Mucosa of descending colon (tissue), 3 donors: ENCODE measurements at regions of chr1 and their contacts with region 1.

Region 1: DNA sequence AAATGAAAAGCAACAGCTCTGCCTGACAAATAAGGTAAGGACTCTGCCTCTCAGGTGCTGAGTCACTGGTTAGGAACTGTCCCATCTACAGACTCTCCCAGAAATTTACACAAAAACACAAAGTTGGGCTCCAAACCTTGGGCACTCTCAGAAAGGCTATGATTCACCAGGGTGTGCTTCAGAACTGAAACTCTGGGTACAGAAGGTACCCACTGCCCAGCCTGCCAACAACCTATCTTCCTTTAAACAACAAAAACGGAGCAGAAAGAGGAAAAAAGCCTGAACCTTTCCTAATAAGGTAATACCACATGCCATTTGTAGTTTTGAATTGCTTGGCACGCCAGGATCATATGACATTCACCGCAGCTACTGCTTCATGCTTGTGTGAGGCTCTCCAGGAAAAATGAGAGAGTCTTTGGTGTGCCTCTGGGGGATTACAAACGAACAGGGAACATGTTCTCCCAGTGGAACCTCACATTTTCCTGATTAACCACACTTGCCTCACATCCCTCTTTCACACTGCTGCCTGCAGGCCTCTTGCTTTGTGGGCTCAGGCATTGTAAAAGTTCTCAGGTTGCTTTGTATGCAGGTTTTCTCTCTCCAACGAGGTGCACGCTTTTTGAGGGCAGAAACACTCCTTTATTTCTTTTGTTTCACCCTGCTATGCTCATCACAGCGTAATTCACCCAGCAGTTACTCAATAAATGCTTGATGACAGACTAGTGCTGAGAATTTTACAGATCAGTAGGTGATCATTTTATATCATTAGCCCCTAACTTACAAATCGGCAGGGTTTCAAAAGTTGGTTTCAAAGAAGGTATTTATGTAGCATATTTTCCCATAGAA is 65.1 kb downstream of the GADD45A start:
- DNase-seq: no peak
- ATAC-seq: peak; percentile 70
- H3K4me3 ChIP-seq: no peak overlapping the region
- H3K4me1 ChIP-seq: peaks cover 43% of the 10 kb centered on the region
- CTCF ChIP-seq: no peak

Region 2: GRCh38 chr1:67535474-67535873 is 214.6 kb before region 1 on chr1:
- intact Hi-C with region 1: loop called in 1 of 2 experiments (anchors 10 kb)
- DNase-seq: peak; percentile 81 to 89 (median 88)
- ATAC-seq: peak; percentile 92
- H3K4me3 ChIP-seq: no peak overlapping the region
- H3K4me1 ChIP-seq: peaks cover 13% of the 10 kb centered on the region
- CTCF ChIP-seq: peak; percentile 91

Region 3: GRCh38 chr1:67685067-67685557 is 65.0 kb before region 1 on chr1 and contains the start of gene GADD45A:
- intact Hi-C with region 1: loop called in 1 of 2 experiments (anchors 10 kb)
- DNase-seq: peak; percentile 98 to 99 (median 99)
- ATAC-seq: peak; percentile 88
- H3K4me3 ChIP-seq: peak within 1 kb of the TSS; percentile 78
- H3K4me1 ChIP-seq: peaks cover 26% of the 10 kb centered on the region
- CTCF ChIP-seq: no peak
- total RNA-seq, gene GADD45A: 19.5 to 40.3 (median 27.1) TPM